Activated CD4-positive, alpha-beta memory T cell treated with anti-CD3 and anti-CD28 coated beads for 36 hours (primary cell): ENCODE measurements at regions of chr4 and their contacts with region 1.

Region 1: GRCh38 chr4:40316782-40317635 is 18.1 kb upstream of the CHRNA9 start:
- DNase-seq: peak; percentile 77
- H3K4me3 Mint-ChIP-seq: peak overlapping the region; percentile 78
- H3K27ac Mint-ChIP-seq: peak overlapping the region; percentile 94
- H3K4me1 Mint-ChIP-seq: peaks cover 36% of the 10 kb centered on the region
- H3K27me3 Mint-ChIP-seq: no peaks in the 10 kb centered on the region

Region 2: GRCh38 chr4:40205259-40206198 is 111.5 kb before region 1 on chr4:
- CTCF ChIA-PET with region 1: interaction called, 24 read pairs
- POLR2A ChIA-PET with region 1: interaction called, 53 read pairs
- intact Hi-C with region 1: loop called (anchors 1 kb)
- DNase-seq: peak; percentile 69
- H3K4me3 Mint-ChIP-seq: peak overlapping the region; percentile 93
- H3K27ac Mint-ChIP-seq: peak overlapping the region; percentile 98
- H3K4me1 Mint-ChIP-seq: peaks cover 61% of the 10 kb centered on the region
- H3K27me3 Mint-ChIP-seq: no peaks in the 10 kb centered on the region

Region 3: DNA sequence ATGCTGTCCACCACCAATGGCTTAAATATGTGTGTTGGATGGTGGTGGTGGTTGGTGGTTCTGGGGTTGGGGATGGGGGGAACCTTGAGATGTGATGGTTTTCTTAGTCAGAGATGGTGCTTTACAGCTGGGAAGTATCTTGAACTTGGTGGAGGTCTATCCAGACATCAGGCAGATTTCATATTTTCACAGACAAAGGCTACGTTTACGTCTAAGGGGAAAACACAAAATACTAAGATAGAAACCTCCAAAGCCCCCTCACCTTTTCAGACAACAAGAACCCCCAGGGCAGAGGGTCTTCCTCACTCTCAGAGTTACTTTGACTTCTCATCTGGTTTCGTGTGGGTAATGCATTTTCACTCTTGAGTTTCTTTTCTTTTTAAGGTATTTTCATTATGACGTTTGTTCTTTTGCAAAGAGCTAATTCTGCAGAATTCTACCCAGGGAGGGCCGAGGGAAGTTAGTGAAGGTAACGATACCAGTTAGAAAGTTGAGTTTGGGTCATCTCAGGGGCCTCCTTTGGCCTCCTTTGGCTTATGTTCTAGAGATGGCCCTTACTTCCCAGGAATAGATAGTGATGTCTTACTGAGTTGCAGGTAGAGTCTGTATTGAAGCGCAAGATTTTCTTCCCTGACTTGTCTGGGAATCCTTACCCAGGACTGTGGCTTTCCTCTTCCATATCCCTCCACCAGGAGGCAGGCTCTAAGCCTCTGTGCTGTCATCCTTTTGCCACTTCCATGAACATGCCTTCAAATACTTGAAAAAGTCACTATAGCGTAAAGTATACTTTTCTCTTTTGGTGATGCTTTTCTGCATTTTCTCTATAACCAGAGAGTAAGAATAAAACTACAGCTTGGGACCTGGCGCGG is 88.3 kb before region 1 on chr4:
- CTCF ChIA-PET with region 1: interaction called, 30 read pairs
- POLR2A ChIA-PET with region 1: interaction called, 11 read pairs
- intact Hi-C with region 1: loop called (anchors 1 kb)
- DNase-seq: peak; percentile 56
- H3K4me3 Mint-ChIP-seq: peak overlapping the region; percentile 58
- H3K27ac Mint-ChIP-seq: peak overlapping the region; percentile 92
- H3K4me1 Mint-ChIP-seq: peaks cover 93% of the 10 kb centered on the region
- H3K27me3 Mint-ChIP-seq: no peaks in the 10 kb centered on the region

Region 4: DNA sequence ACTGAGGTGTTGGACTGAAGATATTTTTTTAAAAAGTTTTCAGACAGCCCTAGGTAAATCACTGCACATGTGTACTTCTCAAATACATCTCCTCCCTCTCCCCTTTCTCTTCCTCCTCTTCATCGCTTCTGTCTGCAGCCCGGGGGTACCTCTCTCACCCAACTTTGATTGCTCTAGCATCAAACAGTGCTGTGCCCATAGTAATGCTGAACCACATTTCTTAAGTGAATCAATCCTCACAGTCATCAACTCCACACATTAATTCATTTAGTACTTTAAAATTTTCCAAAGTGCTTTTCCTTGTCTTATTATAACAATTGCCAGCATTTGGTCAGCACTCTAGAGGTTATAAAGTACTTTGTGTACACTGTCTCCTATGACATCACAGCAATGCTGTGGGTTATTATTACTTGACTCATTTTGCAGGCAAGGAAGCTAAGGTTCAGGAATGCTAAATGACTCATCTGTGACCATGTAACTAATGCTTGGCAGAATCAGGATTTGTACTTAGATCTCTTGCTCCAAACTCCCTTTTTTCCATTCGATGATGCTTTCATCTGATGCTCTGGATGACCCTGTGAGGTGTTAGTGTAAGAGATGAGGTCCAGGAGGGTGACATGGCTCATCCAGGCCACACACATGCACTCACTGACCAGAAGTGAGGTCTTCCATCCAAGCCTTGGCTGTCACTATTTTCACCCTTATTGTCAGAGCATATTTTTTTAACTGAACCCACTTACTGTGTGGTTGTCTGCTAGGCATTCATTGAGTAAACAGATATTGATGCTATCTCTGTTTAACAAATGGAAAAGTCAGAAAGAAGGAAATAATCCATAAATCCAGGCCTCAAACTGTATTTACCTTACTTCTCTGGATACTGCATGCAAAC is 61.4 kb before region 1 on chr4:
- CTCF ChIA-PET with region 1: interaction called, 4 read pairs
- POLR2A ChIA-PET with region 1: no interaction called
- intact Hi-C with region 1: loop called (anchors 1 kb)
- DNase-seq: no peak
- H3K4me3 Mint-ChIP-seq: no peak overlapping the region
- H3K27ac Mint-ChIP-seq: peak overlapping the region; percentile 72
- H3K4me1 Mint-ChIP-seq: peaks cover 59% of the 10 kb centered on the region
- H3K27me3 Mint-ChIP-seq: no peaks in the 10 kb centered on the region

Region 5: DNA sequence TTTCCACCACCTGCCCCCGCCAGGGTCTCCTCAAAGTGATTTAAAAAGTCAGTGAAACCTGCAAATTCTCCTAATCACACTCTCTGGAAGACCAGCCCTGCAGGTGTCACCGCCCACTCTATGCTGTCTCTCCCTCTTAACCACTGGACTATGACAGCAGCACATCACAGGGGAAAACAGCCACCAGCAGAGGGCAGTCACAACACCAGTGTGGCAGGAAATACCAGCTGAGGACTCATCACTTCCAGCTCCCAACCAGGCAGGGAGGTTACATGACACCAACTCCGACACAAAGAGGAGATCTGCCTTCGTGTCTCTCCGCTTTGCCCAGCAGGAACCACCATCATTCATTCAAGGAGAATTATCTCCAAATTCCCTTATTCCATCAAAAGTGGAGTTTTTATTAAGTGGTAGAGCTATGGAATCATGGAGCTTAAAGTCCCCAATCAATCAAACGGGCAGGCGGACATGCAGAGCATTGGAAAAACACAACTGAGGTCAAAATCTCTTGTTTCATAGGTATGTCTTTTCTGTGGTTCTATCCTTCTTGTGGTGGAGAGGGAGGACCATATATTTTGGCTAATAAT is 524.1 kb after region 1 on chr4:
- CTCF ChIA-PET with region 1: interaction called, 4 read pairs
- POLR2A ChIA-PET with region 1: no interaction called
- intact Hi-C with region 1: loop called (anchors 2 kb)
- DNase-seq: peak; percentile 90
- H3K4me3 Mint-ChIP-seq: no peak overlapping the region
- H3K27ac Mint-ChIP-seq: no peak overlapping the region
- H3K4me1 Mint-ChIP-seq: peaks cover 2% of the 10 kb centered on the region
- H3K27me3 Mint-ChIP-seq: peaks cover 8% of the 10 kb centered on the region

Region 6: DNA sequence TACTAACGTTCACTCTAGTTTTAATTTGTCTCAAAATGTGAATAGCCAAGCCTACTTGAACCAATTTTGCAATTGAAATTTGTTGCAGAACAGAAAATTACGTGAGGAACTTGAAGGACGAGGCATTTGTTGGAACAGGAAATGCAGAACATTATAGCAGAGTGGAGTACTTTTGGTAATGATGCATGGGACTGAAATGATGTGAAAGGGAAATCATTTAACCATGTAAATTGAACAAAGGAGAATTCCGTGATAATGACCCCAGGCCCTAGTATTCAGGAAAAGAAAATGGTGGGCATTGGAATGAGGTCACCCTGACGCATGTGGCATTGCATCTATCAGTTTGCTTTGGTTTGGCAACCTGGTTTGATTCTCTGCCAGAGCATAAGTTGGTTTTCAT is 1880.3 kb after region 1 on chr4:
- CTCF ChIA-PET with region 1: no interaction called
- POLR2A ChIA-PET with region 1: no interaction called
- intact Hi-C with region 1: no loop called
- DNase-seq: no peak
- H3K4me3 Mint-ChIP-seq: no peak overlapping the region
- H3K27ac Mint-ChIP-seq: no peak overlapping the region
- H3K4me1 Mint-ChIP-seq: no peaks in the 10 kb centered on the region
- H3K27me3 Mint-ChIP-seq: no peaks in the 10 kb centered on the region